MCF 10A (cell line): ENCODE measurements at regions of chr5 and their contacts with region 1.

Region 1: GRCh38 chr5:159163027-159163700 is 46.2 kb downstream of the RNF145 start:
- DNase-seq: peak; percentile 78
- H3K4me3 Mint-ChIP-seq: peak overlapping the region; percentile 3
- H3K27ac Mint-ChIP-seq: peak overlapping the region; percentile 69
- H3K4me1 Mint-ChIP-seq: peaks cover 27% of the 10 kb centered on the region
- H3K27me3 Mint-ChIP-seq: no peaks in the 10 kb centered on the region
- CTCF ChIP-seq: no peak

Region 2: GRCh38 chr5:159139802-159140201 is 23.4 kb before region 1 on chr5:
- CTCF ChIA-PET with region 1: no interaction called
- POLR2A ChIA-PET with region 1: no interaction called
- intact Hi-C with region 1: no loop called
- DNase-seq: no peak
- H3K4me3 Mint-ChIP-seq: no peak overlapping the region
- H3K27ac Mint-ChIP-seq: no peak overlapping the region
- H3K4me1 Mint-ChIP-seq: no peaks in the 10 kb centered on the region
- H3K27me3 Mint-ChIP-seq: peaks cover 37% of the 10 kb centered on the region
- CTCF ChIP-seq: no peak

Region 3: DNA sequence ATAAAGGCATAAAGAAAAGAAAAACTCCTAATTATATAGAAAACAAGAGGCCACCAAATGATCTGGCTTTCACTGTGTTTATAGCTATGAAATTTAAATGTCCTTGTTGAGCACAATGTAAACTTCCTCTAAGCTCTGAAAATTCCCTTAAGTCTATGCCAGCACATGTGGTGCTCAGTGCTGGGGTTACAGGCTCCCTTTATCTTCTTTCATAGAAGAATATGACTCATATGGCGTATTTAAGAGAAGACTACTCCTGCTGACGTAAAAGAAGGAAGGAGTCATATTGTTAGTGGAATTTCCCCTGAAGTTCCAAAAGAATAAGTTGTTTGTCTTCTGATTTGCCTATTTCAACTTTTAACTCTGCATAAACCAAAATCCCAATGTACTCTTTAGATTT is 15.8 kb after region 1 on chr5:
- CTCF ChIA-PET with region 1: interaction called, 6 read pairs
- POLR2A ChIA-PET with region 1: interaction called, 185 read pairs
- intact Hi-C with region 1: no loop called
- DNase-seq: peak; percentile 95
- H3K4me3 Mint-ChIP-seq: peak overlapping the region; percentile 54
- H3K27ac Mint-ChIP-seq: peak overlapping the region; percentile 96
- H3K4me1 Mint-ChIP-seq: peaks cover 77% of the 10 kb centered on the region
- H3K27me3 Mint-ChIP-seq: no peaks in the 10 kb centered on the region
- CTCF ChIP-seq: no peak

Region 4: GRCh38 chr5:159184858-159185381 is 21.8 kb after region 1 on chr5:
- CTCF ChIA-PET with region 1: no interaction called
- POLR2A ChIA-PET with region 1: interaction called, 185 read pairs
- intact Hi-C with region 1: no loop called
- DNase-seq: peak; percentile 77
- H3K4me3 Mint-ChIP-seq: peak overlapping the region; percentile 48
- H3K27ac Mint-ChIP-seq: peak overlapping the region; percentile 96
- H3K4me1 Mint-ChIP-seq: peaks cover 81% of the 10 kb centered on the region
- H3K27me3 Mint-ChIP-seq: no peaks in the 10 kb centered on the region
- CTCF ChIP-seq: no peak